ENCODE measurements at regions of chr5 and their contacts with region 1.

Region 1: DNA sequence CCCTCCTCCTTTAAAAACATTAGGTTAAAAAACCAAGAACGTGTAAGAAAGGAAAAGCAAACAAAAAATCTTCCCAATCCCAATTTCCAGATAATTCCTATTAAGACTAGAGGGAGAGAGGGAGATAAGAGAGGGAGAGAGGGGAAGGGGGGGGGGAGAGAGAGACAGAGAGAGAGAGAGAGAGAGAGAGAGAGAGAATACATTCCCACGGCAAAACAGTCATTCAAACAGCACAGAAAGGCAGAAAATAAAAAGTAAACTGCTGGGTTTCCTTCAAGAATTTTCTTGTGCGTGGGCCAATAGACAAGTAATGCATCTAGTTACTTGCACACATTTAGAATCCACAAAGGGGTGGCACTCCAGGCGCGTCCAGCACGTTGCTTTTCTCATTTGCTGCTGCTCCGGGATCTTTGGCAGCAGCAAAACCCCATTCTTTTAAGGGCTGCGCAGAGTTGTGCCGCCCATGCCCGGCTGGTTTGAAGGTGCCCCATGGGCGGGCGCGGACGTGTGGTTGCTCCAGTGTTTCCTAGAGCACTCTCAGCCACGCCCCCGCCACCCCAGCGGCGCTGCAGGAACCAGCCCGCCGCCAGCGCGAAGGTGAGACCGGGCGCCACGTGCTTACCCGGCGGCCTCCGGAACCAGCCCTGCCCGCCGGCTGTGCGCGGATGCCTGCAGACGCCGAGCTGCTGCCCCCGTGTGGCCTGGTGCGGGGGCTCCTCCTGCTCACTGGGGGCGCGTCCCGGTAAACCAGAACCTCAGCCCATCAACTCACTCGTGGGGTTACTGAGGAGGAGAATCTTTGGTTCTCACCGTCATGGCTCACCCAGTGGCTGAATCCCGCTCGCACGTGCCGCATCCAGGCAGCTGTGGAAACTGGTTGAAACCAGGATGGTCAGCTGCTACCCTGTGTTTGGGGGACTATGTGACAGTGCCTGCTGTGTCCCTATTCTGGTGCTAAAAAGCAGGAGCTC is 44.6 kb downstream of the STC2 start:
- DNase-seq: peak; percentile 72
- ATAC-seq: peak; percentile 96
- H3K4me3 ChIP-seq: peak overlapping the region in 1 of 2 experiments; percentile 19; a peak in 2 of 4 replicates
- H3K27ac ChIP-seq: no peak overlapping the region
- H3K4me1 ChIP-seq: peaks cover 8 to 13% of the 10 kb centered on the region in 2 experiments
- H3K27me3 ChIP-seq: no peaks in the 10 kb centered on the region
- CTCF ChIP-seq: peak; percentile 82 to 91 (median 87)
- POLR2A ChIP-seq: no peak
- RAD21 ChIP-seq: peak; percentile 91

Region 2: GRCh38 chr5:173165177-173166016 is 118.2 kb before region 1 on chr5:
- CTCF ChIA-PET with region 1: interaction called, 3 read pairs
- POLR2A ChIA-PET with region 1: no interaction called
- RAD21 ChIA-PET with region 1: interaction called in 1 of 2 experiments, 3 read pairs
- intact Hi-C with region 1: loop called (anchors 1 kb)
- DNase-seq: no peak
- ATAC-seq: no peak
- H3K4me3 ChIP-seq: no peak overlapping the region
- H3K27ac ChIP-seq: no peak overlapping the region
- H3K4me1 ChIP-seq: no peaks in the 10 kb centered on the region
- H3K27me3 ChIP-seq: no peaks in the 10 kb centered on the region
- CTCF ChIP-seq: no peak
- POLR2A ChIP-seq: no peak
- RAD21 ChIP-seq: no peak